Gastrocnemius medialis (tissue), 4 donors: ENCODE measurements at regions of chr10 and their contacts with region 1.

Region 1: GRCh38 chr10:25080880-25081581 is 64.6 kb downstream of the THNSL1 start:
- DNase-seq: peak; percentile 71
- ATAC-seq: peak; percentile 98 to 100
- H3K4me3 ChIP-seq: no peak overlapping the region
- H3K27ac ChIP-seq: peak overlapping the region in 1 of 4 donors; percentile 29
- H3K4me1 ChIP-seq: no peaks in the 10 kb centered on the region
- H3K27me3 ChIP-seq: no peaks in the 10 kb centered on the region
- CTCF ChIP-seq: peak; percentile 73 to 90 (median 78)
- POLR2A ChIP-seq: no peak

Region 2: DNA sequence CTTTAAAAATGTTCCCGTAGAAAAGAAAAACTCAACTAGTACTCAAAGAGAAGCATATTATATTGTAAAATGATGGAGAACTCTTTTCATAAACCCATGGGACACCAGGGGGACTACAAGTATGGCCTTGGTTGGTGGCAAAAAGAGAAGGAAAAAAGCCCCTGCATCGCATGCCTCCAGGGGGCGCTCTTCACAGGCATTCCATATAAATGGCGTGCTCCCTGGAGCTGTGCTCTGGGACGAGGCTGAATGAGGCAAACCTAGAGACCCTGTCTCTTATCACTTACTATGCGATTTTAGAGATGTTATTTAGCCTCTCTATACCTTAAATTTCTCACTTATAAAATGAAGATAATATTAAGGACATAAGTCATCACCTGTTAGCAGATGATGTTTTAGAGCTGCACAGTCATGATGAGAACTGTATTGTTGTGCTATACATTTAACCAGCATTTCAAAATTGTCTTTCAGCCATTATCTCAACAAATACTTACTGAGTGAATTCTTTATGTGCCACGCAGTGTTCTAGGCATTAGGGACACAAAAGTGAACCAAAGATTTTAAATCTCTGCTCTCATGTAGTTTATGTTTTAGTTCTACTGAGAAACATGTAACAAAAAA is 463.1 kb before region 1 on chr10:
- in situ Hi-C with region 1: no loop called
- intact Hi-C with region 1: loop called (anchors 2 kb)
- DNase-seq: peak; percentile 19 to 44
- ATAC-seq: peak; percentile 44 to 81
- H3K4me3 ChIP-seq: no peak overlapping the region
- H3K27ac ChIP-seq: no peak overlapping the region
- H3K4me1 ChIP-seq: no peaks in the 10 kb centered on the region
- H3K27me3 ChIP-seq: no peaks in the 10 kb centered on the region
- CTCF ChIP-seq: peak; percentile 67 to 90 (median 72)
- POLR2A ChIP-seq: no peak

Region 3: GRCh38 chr10:25016376-25017154 is 64.5 kb before region 1 on chr10 and contains the start of gene THNSL1:
- in situ Hi-C with region 1: no loop called
- intact Hi-C with region 1: loop called (anchors 5 kb)
- DNase-seq: peak; percentile 97 to 99
- ATAC-seq: peak; percentile 94 to 98
- H3K4me3 ChIP-seq: peak within 1 kb of the TSS; percentile 78 to 87 (median 83)
- H3K27ac ChIP-seq: peak within 1 kb of the TSS; percentile 90 to 94 (median 92)
- H3K4me1 ChIP-seq: peaks cover 13 to 16% of the 10 kb centered on the region in 2 donors
- H3K27me3 ChIP-seq: no peaks in the 10 kb centered on the region
- CTCF ChIP-seq: no peak
- POLR2A ChIP-seq: peak; percentile 80 to 94
- total RNA-seq, gene THNSL1: 0.82 to 2.0 (median 1.7) TPM

Region 4: DNA sequence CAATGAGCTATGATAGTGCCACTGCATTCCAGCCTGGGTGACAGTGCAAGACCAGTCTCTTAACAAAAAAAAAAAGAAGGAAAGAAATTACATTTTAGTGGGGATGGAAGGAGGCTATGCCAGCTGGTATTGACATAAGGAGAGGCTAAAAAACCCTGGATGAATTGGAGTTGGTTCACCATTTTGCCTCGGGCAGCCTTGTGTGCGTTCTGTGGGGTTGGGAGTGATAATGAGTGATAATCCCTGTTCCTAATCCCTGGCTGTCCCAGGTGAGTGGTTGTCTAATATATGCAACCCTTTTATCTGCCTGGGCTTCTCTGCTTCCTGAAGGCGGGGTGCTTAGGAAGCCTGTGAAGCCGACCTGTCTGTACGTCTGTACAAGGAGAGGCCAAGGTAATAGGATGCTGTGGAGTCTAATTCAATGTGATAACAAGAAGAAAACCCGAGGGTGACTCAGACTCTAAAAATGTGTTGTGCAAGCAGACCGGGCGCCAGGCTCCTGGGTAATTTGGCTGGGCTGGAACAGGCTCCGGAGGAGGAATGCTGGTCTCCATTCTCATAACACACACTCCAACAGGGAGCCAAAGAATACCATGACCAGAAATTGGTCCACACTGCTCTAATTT is 21.2 kb before region 1 on chr10:
- in situ Hi-C with region 1: no loop called
- intact Hi-C with region 1: no loop called
- DNase-seq: no peak
- ATAC-seq: no peak
- H3K4me3 ChIP-seq: no peak overlapping the region
- H3K27ac ChIP-seq: no peak overlapping the region
- H3K4me1 ChIP-seq: no peaks in the 10 kb centered on the region
- H3K27me3 ChIP-seq: no peaks in the 10 kb centered on the region
- CTCF ChIP-seq: no peak
- POLR2A ChIP-seq: no peak